ENCODE measurements at regions of chr11 and their contacts with region 1.

Region 1: DNA sequence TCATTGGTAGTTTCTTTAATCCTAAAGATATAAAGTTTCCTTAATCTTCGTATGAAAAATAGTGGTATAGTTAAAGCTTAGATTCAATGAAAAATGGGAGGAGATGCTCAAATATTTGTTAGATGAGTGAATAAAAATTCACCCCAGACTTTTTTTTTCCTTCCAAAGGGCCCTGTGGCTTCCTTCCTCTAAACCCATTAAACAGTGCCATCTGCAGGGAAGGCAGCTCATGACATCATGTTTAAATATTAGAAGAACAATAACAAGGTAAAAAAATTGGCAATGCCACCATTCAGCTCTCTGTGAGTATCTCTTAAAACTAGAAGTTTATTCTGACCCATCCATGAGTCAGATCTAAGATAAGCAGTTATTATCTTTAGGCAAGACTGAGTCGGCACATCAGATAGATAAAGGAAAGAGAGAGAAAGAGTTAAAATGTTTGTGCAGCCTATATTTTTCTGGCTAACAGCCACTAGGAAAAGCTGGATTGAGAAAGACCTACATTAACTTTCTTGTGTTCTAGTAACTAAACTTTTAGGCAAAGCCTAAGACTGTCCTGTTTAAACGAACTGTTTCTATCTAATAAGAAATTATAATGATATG is 19.1 kb upstream of the OOSP1 start:
- DNase-seq: peak; percentile 85
- H3K4me3 ChIP-seq: peak overlapping the region; percentile 22
- H3K27ac ChIP-seq: peak overlapping the region; percentile 76
- H3K4me1 ChIP-seq: peaks cover 13% of the 10 kb centered on the region
- H3K27me3 ChIP-seq: no peaks in the 10 kb centered on the region

Region 2: GRCh38 chr11:59776210-59777066 is 142.7 kb before region 1 on chr11:
- in situ Hi-C with region 1: no loop called
- DNase-seq: peak; percentile 35
- H3K4me3 ChIP-seq: no peak overlapping the region
- H3K27ac ChIP-seq: no peak overlapping the region
- H3K4me1 ChIP-seq: peaks cover 7% of the 10 kb centered on the region; the same call in 1 of the 2 replicates
- H3K27me3 ChIP-seq: no peaks in the 10 kb centered on the region

Region 3: GRCh38 chr11:59822989-59823566 is 96.0 kb before region 1 on chr11:
- in situ Hi-C with region 1: loop called (anchors 5 kb)
- DNase-seq: peak; percentile 87
- H3K4me3 ChIP-seq: no peak overlapping the region
- H3K27ac ChIP-seq: no peak overlapping the region
- H3K4me1 ChIP-seq: no peaks in the 10 kb centered on the region
- H3K27me3 ChIP-seq: no peaks in the 10 kb centered on the region

Region 4: GRCh38 chr11:59849129-59849528 is 70.0 kb before region 1 on chr11:
- in situ Hi-C with region 1: no loop called
- DNase-seq: no peak
- H3K4me3 ChIP-seq: no peak overlapping the region
- H3K27ac ChIP-seq: no peak overlapping the region
- H3K4me1 ChIP-seq: no peaks in the 10 kb centered on the region
- H3K27me3 ChIP-seq: no peaks in the 10 kb centered on the region

Region 5: DNA sequence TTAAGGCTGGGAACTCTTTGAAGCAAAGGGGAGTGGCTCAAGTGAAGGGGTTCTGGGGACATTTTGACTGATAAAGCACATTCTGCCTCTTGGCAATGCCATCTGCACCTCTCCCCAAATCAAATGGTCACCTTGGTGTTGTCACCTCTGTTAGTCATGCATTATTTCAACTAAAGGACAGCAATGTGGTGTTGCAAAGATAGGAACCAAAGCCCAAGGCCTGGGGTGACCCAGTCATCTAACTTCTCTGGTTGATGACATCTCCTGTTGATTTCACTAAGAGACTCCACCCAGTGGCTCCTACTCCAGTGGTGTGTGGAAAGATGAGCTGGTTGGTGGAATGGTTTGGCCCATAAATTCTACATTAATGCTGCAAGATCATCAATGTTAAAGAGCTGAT is 528.8 kb after region 1 on chr11:
- in situ Hi-C with region 1: no loop called
- DNase-seq: no peak
- H3K4me3 ChIP-seq: no peak overlapping the region
- H3K27ac ChIP-seq: no peak overlapping the region
- H3K4me1 ChIP-seq: no peaks in the 10 kb centered on the region
- H3K27me3 ChIP-seq: no peaks in the 10 kb centered on the region